ENCODE measurements at regions of chr11 and their contacts with region 1.

Region 1: DNA sequence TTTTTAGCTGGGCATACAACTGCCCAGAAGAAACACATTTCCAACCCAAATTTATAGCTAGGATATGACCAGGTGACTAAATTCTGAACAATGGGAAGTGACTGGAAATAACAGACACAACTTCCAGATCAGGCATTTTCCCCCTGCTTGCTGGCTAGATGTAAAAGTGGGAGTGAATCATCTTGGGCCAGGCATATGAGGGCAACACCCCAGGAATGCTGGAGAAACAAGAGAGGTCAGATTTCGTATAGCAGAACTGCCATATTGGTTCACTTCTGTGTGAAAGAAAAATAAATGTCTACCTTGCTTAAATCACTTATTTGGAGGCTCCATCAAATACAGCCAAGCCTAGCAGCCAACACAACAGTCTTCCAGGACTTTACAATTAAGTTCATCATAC is 7.4 kb downstream of the ATL3 start:
- DNase-seq: no peak
- ATAC-seq: no peak
- H3K4me3 ChIP-seq: no peak overlapping the region
- H3K27ac ChIP-seq: no peak overlapping the region
- H3K4me1 ChIP-seq: peaks cover 18% of the 10 kb centered on the region
- H3K27me3 ChIP-seq: no peaks in the 10 kb centered on the region
- CTCF ChIP-seq: no peak

Region 2: DNA sequence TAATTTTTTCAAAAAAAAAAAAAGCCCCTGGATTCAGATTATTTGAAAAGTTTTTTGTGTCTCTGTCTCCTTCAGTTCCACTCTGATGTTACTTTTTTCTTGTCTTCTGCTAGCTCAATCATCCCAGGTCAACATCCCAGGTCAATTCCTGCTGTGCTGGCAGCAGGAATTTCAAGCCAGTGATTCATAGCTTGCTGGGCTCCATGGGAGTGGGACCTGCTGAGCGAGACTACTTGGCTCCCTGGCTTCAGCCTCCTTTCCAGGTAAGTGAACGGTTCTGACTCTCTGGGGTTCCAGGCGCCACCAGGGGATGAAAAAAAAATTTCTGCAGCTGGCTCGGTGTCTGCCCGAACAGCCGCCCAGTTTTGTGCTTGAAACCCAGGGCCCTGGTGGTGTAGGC is 204.2 kb before region 1 on chr11:
- CTCF ChIA-PET with region 1: no interaction called
- POLR2A ChIA-PET with region 1: no interaction called
- in situ Hi-C with region 1: no loop called
- intact Hi-C with region 1: no loop called
- DNase-seq: no peak
- ATAC-seq: no peak
- H3K4me3 ChIP-seq: no peak overlapping the region
- H3K27ac ChIP-seq: no peak overlapping the region
- H3K4me1 ChIP-seq: no peaks in the 10 kb centered on the region
- H3K27me3 ChIP-seq: peaks cover 2% of the 10 kb centered on the region; the same call in 1 of the 2 replicates
- CTCF ChIP-seq: no peak

Region 3: GRCh38 chr11:63694596-63694995 is 30.8 kb after region 1 on chr11:
- CTCF ChIA-PET with region 1: interaction called, 4 read pairs
- POLR2A ChIA-PET with region 1: interaction called, 10 read pairs
- in situ Hi-C with region 1: no loop called
- intact Hi-C with region 1: no loop called
- DNase-seq: no peak
- ATAC-seq: no peak
- H3K4me3 ChIP-seq: no peak overlapping the region
- H3K27ac ChIP-seq: no peak overlapping the region
- H3K4me1 ChIP-seq: no peaks in the 10 kb centered on the region
- H3K27me3 ChIP-seq: no peaks in the 10 kb centered on the region
- CTCF ChIP-seq: no peak